Activated naive CD4-positive, alpha-beta T cell treated with anti-CD3 and anti-CD28 coated beads for 36 hours (primary cell): ENCODE measurements at regions of chr2 and their contacts with region 1.

Region 1: GRCh38 chr2:204108330-204108751 is 171.8 kb downstream of the ICOS start:
- DNase-seq: peak; percentile 72
- H3K4me3 Mint-ChIP-seq: peak overlapping the region; percentile 71
- H3K27ac Mint-ChIP-seq: peak overlapping the region; percentile 96
- H3K4me1 Mint-ChIP-seq: peaks cover 75% of the 10 kb centered on the region
- H3K27me3 Mint-ChIP-seq: peaks cover 2% of the 10 kb centered on the region

Region 2: DNA sequence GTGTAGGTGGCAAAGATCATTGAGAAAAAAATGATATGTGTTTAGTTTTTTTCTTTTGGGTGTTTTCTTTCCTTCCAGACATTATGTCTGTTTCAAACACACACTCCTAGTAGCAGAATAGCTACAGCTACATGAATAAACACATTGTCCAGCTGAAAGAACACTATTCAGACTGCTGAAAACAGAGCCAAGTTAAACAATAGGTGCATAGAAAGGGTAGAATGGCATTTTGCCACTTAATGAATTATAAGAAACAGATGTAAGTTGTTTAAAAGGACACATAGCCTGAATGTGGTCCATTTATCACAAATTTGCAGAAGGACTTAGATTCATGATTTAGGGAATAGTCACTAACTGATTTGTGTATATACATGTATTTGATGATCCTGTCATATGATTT is 220.7 kb before region 1 on chr2:
- CTCF ChIA-PET with region 1: no interaction called
- intact Hi-C with region 1: loop called (anchors 1 kb)
- DNase-seq: no peak
- H3K4me3 Mint-ChIP-seq: no peak overlapping the region
- H3K27ac Mint-ChIP-seq: no peak overlapping the region
- H3K4me1 Mint-ChIP-seq: peaks cover 54% of the 10 kb centered on the region
- H3K27me3 Mint-ChIP-seq: no peaks in the 10 kb centered on the region

Region 3: DNA sequence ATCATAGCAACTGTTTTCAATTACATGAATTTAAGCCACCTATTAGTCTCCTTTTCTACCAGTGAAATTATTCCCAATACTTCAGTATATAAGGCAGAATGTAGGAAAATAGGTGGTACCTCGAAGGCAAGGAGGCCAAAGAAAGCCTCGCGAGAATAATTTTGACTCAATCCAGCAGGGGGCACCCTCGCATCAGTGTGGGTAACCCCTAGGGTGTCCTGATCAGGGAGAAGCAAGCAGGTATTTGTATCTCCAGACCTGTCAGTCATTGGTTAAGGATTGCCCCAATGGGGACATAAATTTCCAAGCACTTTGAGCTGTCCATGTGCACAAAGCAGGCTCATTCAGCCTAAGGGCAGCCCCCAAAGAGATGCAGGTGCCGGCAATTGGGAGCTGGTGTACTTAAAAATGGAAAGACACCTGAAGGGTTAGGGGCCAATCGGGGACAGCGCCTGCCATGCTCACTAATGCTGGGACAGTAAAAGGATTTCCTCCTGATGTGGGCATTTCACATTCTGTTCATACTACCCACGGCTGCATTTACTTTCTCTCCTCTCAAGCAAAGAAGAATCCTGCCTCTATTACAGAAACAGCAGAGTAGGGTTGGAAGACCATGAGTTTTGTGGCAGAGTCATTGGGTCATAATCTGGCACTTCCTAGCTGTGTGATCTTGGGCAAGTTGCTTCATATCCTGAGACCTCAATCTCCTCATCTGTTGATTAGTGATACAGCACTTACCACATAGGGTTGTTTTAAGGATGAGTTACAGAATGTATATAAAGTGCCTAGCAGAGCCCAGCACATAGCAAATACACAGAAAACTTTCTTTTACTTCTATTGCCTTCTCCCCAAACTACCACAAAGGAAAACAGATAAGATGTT is 35.7 kb before region 1 on chr2:
- CTCF ChIA-PET with region 1: interaction called, 38 read pairs
- intact Hi-C with region 1: loop called (anchors 1 kb)
- DNase-seq: peak; percentile 92
- H3K4me3 Mint-ChIP-seq: no peak overlapping the region
- H3K27ac Mint-ChIP-seq: no peak overlapping the region
- H3K4me1 Mint-ChIP-seq: peaks cover 10% of the 10 kb centered on the region
- H3K27me3 Mint-ChIP-seq: peaks cover 2% of the 10 kb centered on the region

Region 4: DNA sequence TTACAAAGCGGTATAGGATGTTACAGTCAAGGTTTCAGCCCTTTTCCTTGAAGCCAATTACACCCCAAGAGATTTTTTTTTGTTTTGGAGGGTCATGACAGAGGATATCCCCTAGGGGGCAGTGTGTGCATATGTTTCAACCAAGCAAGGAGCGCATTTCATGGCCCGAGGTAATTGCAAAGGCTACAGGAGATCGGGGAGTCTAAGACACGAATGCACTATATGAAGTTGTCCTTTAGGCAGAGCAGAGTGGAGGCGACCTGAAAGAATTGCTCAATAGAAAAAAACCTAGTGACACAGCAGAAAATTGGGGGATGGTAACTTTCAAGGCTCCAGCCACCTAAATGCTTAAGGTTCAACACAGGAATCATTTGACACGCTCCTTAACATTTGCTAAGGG is 217.1 kb after region 1 on chr2:
- CTCF ChIA-PET with region 1: no interaction called
- intact Hi-C with region 1: loop called (anchors 1 kb)
- DNase-seq: peak; percentile 74
- H3K4me3 Mint-ChIP-seq: no peak overlapping the region
- H3K27ac Mint-ChIP-seq: no peak overlapping the region
- H3K4me1 Mint-ChIP-seq: no peaks in the 10 kb centered on the region
- H3K27me3 Mint-ChIP-seq: no peaks in the 10 kb centered on the region

Region 5: DNA sequence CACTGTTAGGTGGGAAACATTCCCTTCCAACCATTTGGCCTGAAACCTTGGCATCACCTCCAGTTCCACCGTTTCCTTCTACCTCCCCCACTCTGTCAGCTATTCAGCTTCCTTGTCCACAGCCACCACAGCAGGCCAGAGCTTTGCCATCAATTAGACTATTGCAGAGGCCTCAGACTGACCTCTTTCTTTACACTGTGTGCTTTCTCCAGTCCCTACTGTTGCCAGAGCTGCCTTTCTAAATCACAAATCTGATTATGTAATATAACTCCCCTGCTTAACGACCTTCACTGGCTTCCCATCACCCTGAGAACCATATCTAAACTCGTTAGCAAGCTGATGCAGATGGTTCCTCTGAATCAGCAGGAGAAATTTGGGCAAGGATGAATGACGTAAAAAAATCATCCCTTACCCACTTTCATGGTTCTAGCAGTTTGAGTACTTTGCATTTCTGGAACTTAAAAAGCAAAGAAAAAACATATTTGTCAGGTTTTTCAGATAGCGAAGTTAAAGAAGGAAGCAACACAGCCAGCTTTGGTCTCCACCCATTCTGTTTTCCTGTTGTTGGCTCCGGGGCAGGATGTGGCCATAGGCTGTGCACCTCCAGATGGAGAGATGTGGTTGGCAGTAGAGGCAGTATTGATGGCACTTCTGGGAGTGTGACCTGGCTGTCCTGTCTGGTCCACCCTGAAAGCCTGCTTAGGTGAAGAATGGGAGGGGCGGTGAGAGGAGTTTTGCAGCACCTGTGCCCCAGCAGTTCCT is 859.0 kb after region 1 on chr2:
- CTCF ChIA-PET with region 1: no interaction called
- intact Hi-C with region 1: loop called (anchors 2 kb)
- DNase-seq: peak; percentile 59
- H3K4me3 Mint-ChIP-seq: peak overlapping the region; percentile 7
- H3K27ac Mint-ChIP-seq: peak overlapping the region; percentile 76
- H3K4me1 Mint-ChIP-seq: peaks cover 49% of the 10 kb centered on the region
- H3K27me3 Mint-ChIP-seq: no peaks in the 10 kb centered on the region

Region 6: GRCh38 chr2:205766779-205767359 is 1658.5 kb after region 1 on chr2:
- CTCF ChIA-PET with region 1: no interaction called
- intact Hi-C with region 1: loop called (anchors 1 kb)
- DNase-seq: peak; percentile 80
- H3K4me3 Mint-ChIP-seq: no peak overlapping the region
- H3K27ac Mint-ChIP-seq: no peak overlapping the region
- H3K4me1 Mint-ChIP-seq: peaks cover 12% of the 10 kb centered on the region
- H3K27me3 Mint-ChIP-seq: peaks cover 23% of the 10 kb centered on the region